KBM-7 (cell line): ENCODE measurements at regions of chr3 and their contacts with region 1.

Region 1: DNA sequence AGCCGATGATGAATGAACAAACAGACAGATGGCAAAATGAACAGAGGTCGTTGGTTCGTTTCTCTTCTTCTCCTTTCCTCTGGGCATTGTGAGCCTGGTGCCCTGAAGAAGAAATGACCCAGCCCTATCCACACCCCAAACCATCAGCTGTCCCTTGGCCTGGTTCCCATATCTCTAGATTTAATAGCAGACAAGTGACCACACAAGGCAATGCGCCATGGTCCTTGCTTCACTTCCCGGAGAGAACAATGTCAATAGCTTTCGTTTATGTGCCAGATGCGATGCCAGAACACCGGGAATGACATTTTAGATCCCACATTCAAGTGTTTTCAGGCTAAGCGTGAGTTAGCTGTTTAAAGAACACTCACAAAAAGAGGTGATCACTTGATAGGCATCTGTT is 17.7 kb downstream of the POC1A start:
- DNase-seq: no peak

Region 2: GRCh38 chr3:51605938-51606337 is 530.6 kb before region 1 on chr3:
- in situ Hi-C with region 1: no loop called
- DNase-seq: no peak

Region 3: GRCh38 chr3:51916418-51916817 is 220.1 kb before region 1 on chr3:
- in situ Hi-C with region 1: no loop called
- DNase-seq: no peak

Region 4: DNA sequence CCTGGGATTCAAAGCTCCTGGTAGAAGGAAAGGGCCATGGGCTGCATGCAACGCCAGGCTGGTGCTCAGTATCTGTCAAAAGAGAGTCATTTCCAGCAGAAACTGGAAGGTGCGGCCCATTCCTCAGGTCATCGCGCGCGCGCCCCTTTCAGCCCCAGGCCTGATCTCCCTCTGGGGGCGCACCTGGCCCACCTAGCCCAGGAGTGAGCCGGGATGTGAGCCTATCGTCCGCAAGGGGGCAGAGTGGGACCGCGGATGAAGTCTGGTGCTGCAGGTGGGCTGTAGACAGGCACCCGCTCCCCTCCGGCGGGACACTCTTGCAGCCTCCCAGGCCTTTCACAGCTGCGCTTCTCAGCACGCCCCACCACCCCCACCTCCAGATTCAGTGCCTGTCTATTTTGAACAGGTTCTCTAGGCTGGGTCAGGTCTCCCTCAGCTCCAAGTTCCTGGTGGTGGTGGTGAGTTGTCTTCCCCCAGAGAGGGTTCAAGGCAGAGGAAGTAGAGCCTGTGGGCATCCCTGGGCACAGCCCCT is 135.0 kb before region 1 on chr3:
- in situ Hi-C with region 1: loop called (anchors 10 kb)
- DNase-seq: peak; percentile 88

Region 5: GRCh38 chr3:52552089-52552488 is 415.6 kb after region 1 on chr3:
- in situ Hi-C with region 1: no loop called
- DNase-seq: no peak

Region 6: GRCh38 chr3:52809662-52810377 is 673.3 kb after region 1 on chr3:
- in situ Hi-C with region 1: no loop called
- DNase-seq: no peak